CD8-positive, alpha-beta T cell (primary cell): ENCODE measurements at regions of chr1 and their contacts with region 1.

Region 1: GRCh38 chr1:26233903-26234643 is at the start of gene CEP85:
- DNase-seq: peak; percentile 96 to 99 (median 99)
- ATAC-seq: peak; percentile 90
- H3K4me3 ChIP-seq: peak within 1 kb of the TSS; percentile 87 to 95
- H3K4me3 Mint-ChIP-seq: peak within 1 kb of the TSS; percentile 99
- H3K27ac ChIP-seq: peak within 1 kb of the TSS; percentile 81 to 85
- H3K27ac Mint-ChIP-seq: peak within 1 kb of the TSS; percentile 95
- H3K4me1 ChIP-seq: peaks cover 17% of the 10 kb centered on the region
- H3K4me1 Mint-ChIP-seq: peaks cover 36% of the 10 kb centered on the region
- H3K27me3 ChIP-seq: no peaks in the 10 kb centered on the region
- H3K27me3 Mint-ChIP-seq: no peaks in the 10 kb centered on the region
- CTCF ChIP-seq: peak; percentile 72
- total RNA-seq, gene CEP85: 7.1 TPM

Region 2: GRCh38 chr1:26035959-26036755 is 197.9 kb before region 1 on chr1:
- CTCF ChIA-PET with region 1: no interaction called
- POLR2A ChIA-PET with region 1: no interaction called
- intact Hi-C with region 1: loop called in 1 of 2 experiments (anchors 2 kb)
- DNase-seq: peak; percentile 53 to 88 (median 79)
- ATAC-seq: peak; percentile 70
- H3K4me3 ChIP-seq: peak overlapping the region; percentile 85 to 86
- H3K4me3 Mint-ChIP-seq: peak overlapping the region; percentile 97
- H3K27ac ChIP-seq: peak overlapping the region; percentile 46 to 58
- H3K27ac Mint-ChIP-seq: peak overlapping the region; percentile 95
- H3K4me1 ChIP-seq: peaks cover 11% of the 10 kb centered on the region
- H3K4me1 Mint-ChIP-seq: peaks cover 8% of the 10 kb centered on the region
- H3K27me3 ChIP-seq: no peaks in the 10 kb centered on the region
- H3K27me3 Mint-ChIP-seq: no peaks in the 10 kb centered on the region
- CTCF ChIP-seq: peak; percentile 99

Region 3: DNA sequence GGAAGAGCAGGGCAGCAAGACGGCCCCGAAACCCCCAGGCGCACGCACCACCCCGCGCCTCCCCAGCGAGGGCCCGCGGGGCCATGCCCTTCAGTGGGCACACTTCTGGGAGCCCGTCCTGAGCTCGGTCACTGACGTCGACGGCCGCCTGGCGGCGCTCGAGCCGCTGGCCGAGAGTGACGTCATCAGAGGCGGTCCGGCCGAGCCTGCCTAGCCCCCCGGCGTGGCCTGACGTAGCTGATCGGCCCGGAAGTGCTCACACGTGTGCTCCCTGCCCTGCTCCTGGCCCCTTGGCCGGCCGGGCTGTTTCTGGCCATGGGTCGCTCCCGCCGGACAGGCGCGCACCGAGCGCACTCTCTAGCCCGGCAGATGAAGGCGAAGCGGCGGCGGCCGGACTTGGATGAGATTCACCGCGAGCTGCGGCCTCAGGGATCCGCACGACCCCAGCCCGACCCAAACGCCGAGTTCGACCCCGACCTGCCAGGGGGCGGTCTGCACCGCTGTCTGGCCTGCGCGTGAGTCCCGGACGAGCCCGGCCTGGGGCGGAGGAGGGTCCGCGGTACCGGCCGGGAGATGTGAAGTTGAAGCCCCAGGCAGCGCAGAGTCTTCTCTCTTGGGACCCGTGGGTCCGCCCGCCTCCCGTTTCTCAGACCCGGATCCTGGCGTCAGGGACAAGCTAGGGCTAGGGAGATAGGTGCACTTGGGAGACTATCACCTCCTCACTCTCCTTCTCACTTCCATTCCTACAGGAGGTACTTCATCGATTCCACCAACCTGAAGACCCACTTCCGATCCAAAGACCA is 64.2 kb before region 1 on chr1 and contains the start of gene ZNF593:
- CTCF ChIA-PET with region 1: interaction called, 60 read pairs
- POLR2A ChIA-PET with region 1: interaction called, 17 read pairs
- intact Hi-C with region 1: loop called (anchors 1 kb)
- DNase-seq: peak; percentile 69 to 91 (median 85)
- ATAC-seq: peak; percentile 92
- H3K4me3 ChIP-seq: peak within 1 kb of the TSS; percentile 85 to 89
- H3K4me3 Mint-ChIP-seq: peak within 1 kb of the TSS; percentile 87
- H3K27ac ChIP-seq: peak within 1 kb of the TSS; percentile 77 to 78
- H3K27ac Mint-ChIP-seq: peak within 1 kb of the TSS; percentile 88
- H3K4me1 ChIP-seq: peaks cover 11% of the 10 kb centered on the region
- H3K4me1 Mint-ChIP-seq: peaks cover 12% of the 10 kb centered on the region
- H3K27me3 ChIP-seq: no peaks in the 10 kb centered on the region
- H3K27me3 Mint-ChIP-seq: no peaks in the 10 kb centered on the region
- CTCF ChIP-seq: peak; percentile 74
- total RNA-seq, gene ZNF593: 8.1 to 8.8 TPM

Region 4: DNA sequence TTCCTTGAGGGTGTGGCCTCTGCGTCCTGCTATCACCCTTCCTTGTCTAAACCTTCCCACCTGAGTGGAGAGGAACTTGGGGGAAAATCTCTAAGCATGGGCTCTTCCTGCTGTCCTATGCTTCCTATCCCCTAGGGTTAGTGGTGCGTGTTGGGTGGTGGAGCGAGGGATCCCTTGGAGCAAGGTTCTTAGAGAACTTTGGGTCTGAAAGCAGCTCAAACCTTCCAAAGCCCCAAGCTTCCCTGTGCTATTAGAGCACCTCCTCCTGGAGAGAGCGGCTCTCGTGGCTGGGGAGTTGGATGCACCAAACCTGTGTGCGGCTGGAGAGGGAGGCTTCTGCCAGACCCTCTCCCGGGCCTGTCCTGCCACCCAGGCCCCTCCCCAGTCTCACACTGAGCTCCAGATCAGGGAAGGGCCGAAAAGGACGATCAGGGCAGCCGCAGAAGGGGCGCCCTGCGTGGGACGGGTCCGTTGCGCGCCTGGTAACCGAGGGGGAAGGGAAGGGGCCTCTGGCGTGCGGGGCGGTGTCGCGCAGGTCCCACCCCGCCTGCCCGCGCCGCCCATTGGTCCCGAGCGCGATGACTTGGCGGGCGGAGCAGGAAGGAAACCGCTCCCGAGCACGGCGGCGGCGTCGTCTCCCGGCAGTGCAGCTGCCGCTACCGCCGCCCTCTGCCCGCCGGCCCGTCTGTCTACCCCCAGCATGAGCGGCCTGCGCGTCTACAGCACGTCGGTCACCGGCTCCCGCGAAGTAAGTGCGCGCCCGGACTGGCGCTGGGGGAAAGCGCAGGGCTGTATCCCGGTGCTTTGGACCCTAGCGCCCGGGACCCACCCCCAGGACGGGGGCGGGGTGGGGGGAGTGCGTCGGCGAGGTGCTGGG is 45.6 kb after region 1 on chr1 and contains the start of gene SH3BGRL3:
- CTCF ChIA-PET with region 1: interaction called, 14 read pairs
- POLR2A ChIA-PET with region 1: interaction called, 5 read pairs
- intact Hi-C with region 1: loop called in 1 of 2 experiments (anchors 2 kb)
- DNase-seq: peak; percentile 64 to 92 (median 85)
- ATAC-seq: peak; percentile 57
- H3K4me3 ChIP-seq: peak within 1 kb of the TSS; percentile 74 to 93
- H3K4me3 Mint-ChIP-seq: peak within 1 kb of the TSS; percentile 89
- H3K27ac ChIP-seq: peak within 1 kb of the TSS; percentile 69 to 90
- H3K27ac Mint-ChIP-seq: peak within 1 kb of the TSS; percentile 100
- H3K4me1 ChIP-seq: peaks cover 86% of the 10 kb centered on the region
- H3K4me1 Mint-ChIP-seq: peaks cover 86% of the 10 kb centered on the region
- H3K27me3 ChIP-seq: no peaks in the 10 kb centered on the region
- H3K27me3 Mint-ChIP-seq: no peaks in the 10 kb centered on the region
- CTCF ChIP-seq: no peak
- total RNA-seq, gene SH3BGRL3: 187 to 191 TPM

Region 5: GRCh38 chr1:26336477-26337205 is 102.6 kb after region 1 on chr1:
- CTCF ChIA-PET with region 1: no interaction called
- POLR2A ChIA-PET with region 1: no interaction called
- intact Hi-C with region 1: loop called in 1 of 2 experiments (anchors 1 kb)
- DNase-seq: peak; percentile 67 to 91 (median 86)
- ATAC-seq: peak; percentile 86
- H3K4me3 ChIP-seq: peak overlapping the region; percentile 65 to 89
- H3K4me3 Mint-ChIP-seq: peak overlapping the region; percentile 87
- H3K27ac ChIP-seq: no peak overlapping the region
- H3K27ac Mint-ChIP-seq: no peak overlapping the region
- H3K4me1 ChIP-seq: peaks cover 18% of the 10 kb centered on the region
- H3K4me1 Mint-ChIP-seq: peaks cover 13% of the 10 kb centered on the region
- H3K27me3 ChIP-seq: no peaks in the 10 kb centered on the region
- H3K27me3 Mint-ChIP-seq: no peaks in the 10 kb centered on the region
- CTCF ChIP-seq: no peak

Region 6: DNA sequence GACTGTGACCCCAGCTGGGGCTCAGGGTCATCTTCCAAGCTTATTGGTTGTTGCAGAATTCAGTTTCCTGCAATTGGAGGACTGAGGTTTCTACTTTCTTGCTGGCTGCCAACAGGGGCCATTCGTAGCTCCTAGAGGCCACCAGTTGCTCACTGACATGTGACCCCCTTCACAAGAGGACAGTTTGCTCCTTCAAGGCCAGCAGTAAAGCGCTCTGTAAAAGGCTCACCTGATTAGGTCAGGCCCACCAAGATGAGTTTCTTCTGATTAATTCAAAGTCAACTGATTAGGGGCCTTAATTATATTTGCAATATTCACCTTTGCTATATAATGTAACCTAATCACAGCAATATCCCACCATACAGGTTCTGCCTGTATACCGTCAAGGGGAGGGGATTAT is 852.0 kb after region 1 on chr1:
- CTCF ChIA-PET with region 1: no interaction called
- POLR2A ChIA-PET with region 1: no interaction called
- intact Hi-C with region 1: no loop called
- DNase-seq: no peak
- ATAC-seq: no peak
- H3K4me3 ChIP-seq: no peak overlapping the region
- H3K4me3 Mint-ChIP-seq: no peak overlapping the region
- H3K27ac ChIP-seq: no peak overlapping the region
- H3K27ac Mint-ChIP-seq: no peak overlapping the region
- H3K4me1 ChIP-seq: no peaks in the 10 kb centered on the region
- H3K4me1 Mint-ChIP-seq: peaks cover 6% of the 10 kb centered on the region
- H3K27me3 ChIP-seq: peaks cover 0 to 7% of the 10 kb centered on the region in 2 experiments
- H3K27me3 Mint-ChIP-seq: no peaks in the 10 kb centered on the region
- CTCF ChIP-seq: no peak